ENCODE measurements at regions of chr1 and their contacts with region 1.

Region 1: GRCh38 chr1:23484253-23485001 is 448 bp upstream of the ASAP3 start:
- DNase-seq: peak; percentile 62
- H3K4me3 ChIP-seq: peak overlapping the region; percentile 78
- H3K27me3 ChIP-seq: peaks cover 5% of the 10 kb centered on the region
- CTCF ChIP-seq: no peak

Region 2: GRCh38 chr1:23337869-23338268 is 146.6 kb before region 1 on chr1:
- CTCF ChIA-PET with region 1: no interaction called
- POLR2A ChIA-PET with region 1: interaction called, 26 read pairs
- DNase-seq: no peak
- H3K4me3 ChIP-seq: no peak overlapping the region
- H3K27me3 ChIP-seq: no peaks in the 10 kb centered on the region
- CTCF ChIP-seq: no peak

Region 3: GRCh38 chr1:23611608-23612327 is 127.3 kb after region 1 on chr1:
- CTCF ChIA-PET with region 1: no interaction called
- POLR2A ChIA-PET with region 1: no interaction called
- DNase-seq: no peak
- H3K4me3 ChIP-seq: no peak overlapping the region
- H3K27me3 ChIP-seq: no peaks in the 10 kb centered on the region; the same call in 1 of the 2 replicates
- CTCF ChIP-seq: no peak

Measured in BJ (cell line).